CD8-positive, alpha-beta T cell (primary cell): ENCODE measurements at regions of chr7 and their contacts with region 1.

Region 1: GRCh38 chr7:89104748-89105685 is 309.5 kb upstream of the TEX47 start:
- DNase-seq: no peak
- ATAC-seq: no peak
- H3K4me3 ChIP-seq: no peak overlapping the region
- H3K4me3 Mint-ChIP-seq: no peak overlapping the region
- H3K27ac ChIP-seq: no peak overlapping the region
- H3K27ac Mint-ChIP-seq: no peak overlapping the region
- H3K4me1 ChIP-seq: no peaks in the 10 kb centered on the region
- H3K4me1 Mint-ChIP-seq: no peaks in the 10 kb centered on the region
- H3K27me3 ChIP-seq: no peaks in the 10 kb centered on the region
- H3K27me3 Mint-ChIP-seq: peaks cover 2% of the 10 kb centered on the region
- CTCF ChIP-seq: no peak

Region 2: DNA sequence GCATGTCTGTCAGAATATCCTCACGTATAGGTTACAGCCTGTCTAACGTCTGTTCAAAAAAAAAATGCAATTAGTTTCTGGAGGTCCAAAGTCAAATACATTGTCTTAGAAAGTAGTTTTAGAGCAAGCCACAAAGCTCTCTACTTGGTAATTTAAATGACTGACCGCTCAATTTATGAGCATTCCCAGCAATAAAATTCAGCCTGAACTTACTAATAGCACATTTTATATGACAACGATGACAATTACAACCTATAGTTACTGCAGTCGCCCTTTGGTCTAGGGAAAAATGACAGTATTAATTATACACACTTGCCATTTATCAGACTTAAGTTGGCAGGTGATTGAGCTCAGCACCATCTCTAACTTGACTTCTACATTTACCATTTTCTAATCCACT is 623.5 kb after region 1 on chr7:
- CTCF ChIA-PET with region 1: no interaction called
- POLR2A ChIA-PET with region 1: no interaction called
- intact Hi-C with region 1: loop called in 1 of 2 experiments (anchors 10 kb)
- DNase-seq: no peak
- ATAC-seq: no peak
- H3K4me3 ChIP-seq: no peak overlapping the region
- H3K4me3 Mint-ChIP-seq: no peak overlapping the region
- H3K27ac ChIP-seq: no peak overlapping the region
- H3K27ac Mint-ChIP-seq: no peak overlapping the region
- H3K4me1 ChIP-seq: no peaks in the 10 kb centered on the region
- H3K4me1 Mint-ChIP-seq: no peaks in the 10 kb centered on the region
- H3K27me3 ChIP-seq: no peaks in the 10 kb centered on the region
- H3K27me3 Mint-ChIP-seq: no peaks in the 10 kb centered on the region
- CTCF ChIP-seq: no peak